ENCODE measurements at regions of chr1 and their contacts with region 1.

Region 1: DNA sequence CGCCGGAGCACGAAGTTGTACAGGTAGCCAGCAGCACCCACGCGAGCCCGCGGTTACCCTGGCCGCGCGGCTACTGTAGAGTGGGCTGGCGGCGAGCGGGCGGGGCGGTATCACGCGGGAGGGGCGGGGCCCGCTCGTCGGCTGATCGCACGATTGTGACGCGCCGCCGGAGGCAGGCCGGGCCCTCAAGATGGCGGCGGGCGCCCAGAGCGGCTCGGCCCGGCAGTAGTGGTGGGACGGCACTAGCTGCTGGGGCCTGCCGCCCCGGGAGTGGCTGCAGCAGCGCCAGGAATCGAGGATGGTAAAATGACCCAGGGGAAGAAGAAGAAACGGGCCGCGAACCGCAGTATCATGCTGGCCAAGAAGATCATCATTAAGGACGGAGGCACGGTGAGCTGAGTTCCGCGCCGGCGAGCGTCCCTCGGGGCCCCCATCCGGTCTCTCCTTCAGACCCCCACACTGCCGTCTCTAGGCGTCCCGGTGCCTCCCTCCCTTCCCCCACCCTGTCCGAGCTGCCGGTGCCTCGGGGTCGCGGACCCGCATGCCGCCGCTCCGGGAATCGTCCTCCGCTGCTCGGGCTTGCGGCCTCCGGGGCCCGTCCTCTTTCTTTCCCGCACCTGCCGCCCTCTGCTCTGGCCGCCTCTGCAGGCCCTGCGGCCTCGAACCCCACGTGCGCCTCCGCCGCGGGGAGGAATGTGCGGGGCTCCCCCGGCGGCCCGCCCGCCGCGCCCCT is 68.3 kb downstream of the SLC35A3 start:
- DNase-seq: peak; percentile 86
- H3K4me3 Mint-ChIP-seq: peak overlapping the region; percentile 98
- H3K27ac Mint-ChIP-seq: peak overlapping the region; percentile 99
- H3K4me1 Mint-ChIP-seq: peaks cover 50% of the 10 kb centered on the region
- H3K27me3 Mint-ChIP-seq: no peaks in the 10 kb centered on the region

Region 2: GRCh38 chr1:99849744-99850458 is 188.2 kb before region 1 on chr1 and contains the start of gene AGL:
- intact Hi-C with region 1: loop called (anchors 10 kb)
- DNase-seq: peak; percentile 81
- H3K4me3 Mint-ChIP-seq: peak within 1 kb of the TSS; percentile 96
- H3K27ac Mint-ChIP-seq: peak within 1 kb of the TSS; percentile 80
- H3K4me1 Mint-ChIP-seq: peaks cover 23% of the 10 kb centered on the region
- H3K27me3 Mint-ChIP-seq: no peaks in the 10 kb centered on the region
- total RNA-seq, gene AGL: 13.2 and 13.8 TPM in 2 replicates

Region 3: GRCh38 chr1:100051401-100051800 is 13.3 kb after region 1 on chr1:
- intact Hi-C with region 1: loop called (anchors 1 kb)
- DNase-seq: no peak
- H3K4me3 Mint-ChIP-seq: no peak overlapping the region
- H3K27ac Mint-ChIP-seq: no peak overlapping the region
- H3K4me1 Mint-ChIP-seq: peaks cover 49% of the 10 kb centered on the region
- H3K27me3 Mint-ChIP-seq: no peaks in the 10 kb centered on the region

Region 4: GRCh38 chr1:100087396-100087795 is 49.3 kb after region 1 on chr1:
- intact Hi-C with region 1: no loop called
- DNase-seq: no peak
- H3K4me3 Mint-ChIP-seq: no peak overlapping the region
- H3K27ac Mint-ChIP-seq: no peak overlapping the region
- H3K4me1 Mint-ChIP-seq: no peaks in the 10 kb centered on the region
- H3K27me3 Mint-ChIP-seq: no peaks in the 10 kb centered on the region

Region 5: DNA sequence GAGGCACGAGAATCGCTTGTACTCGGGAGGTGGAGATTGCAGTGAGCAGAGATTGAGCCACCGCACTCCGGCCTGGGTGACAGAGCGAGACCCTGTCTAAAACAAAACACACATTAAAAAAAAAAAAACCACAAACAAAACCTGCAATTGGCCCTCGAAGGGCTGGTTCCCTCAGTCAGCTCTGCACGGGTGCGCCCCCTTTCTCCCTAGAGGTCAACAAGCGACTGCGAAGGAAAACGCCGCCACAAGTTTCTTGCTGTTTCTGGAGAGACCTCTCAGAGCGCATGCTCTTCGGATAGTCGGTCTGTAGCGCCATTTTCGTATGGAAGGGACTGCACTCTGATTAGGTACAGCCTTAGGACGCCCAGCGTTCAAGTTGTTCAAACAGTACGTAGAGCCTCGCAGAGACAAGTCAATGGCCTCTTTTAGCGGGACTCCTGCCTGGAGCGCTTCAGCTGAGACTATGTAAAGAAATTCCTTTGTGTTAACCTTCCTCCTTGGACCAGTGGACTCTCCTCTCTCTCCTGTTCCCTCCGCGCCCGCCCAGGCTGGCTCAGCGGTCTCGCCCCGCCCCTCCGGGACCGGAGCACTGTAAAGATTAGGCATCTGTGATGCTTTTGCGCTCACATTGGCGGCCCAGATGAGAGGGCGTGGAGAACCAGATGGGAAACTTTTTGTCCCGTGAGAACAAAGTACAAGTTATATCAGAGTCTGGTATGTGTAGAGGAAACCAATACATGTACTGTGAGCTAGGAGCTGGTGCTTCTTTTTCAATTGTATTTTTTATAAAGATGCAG is 313.2 kb after region 1 on chr1:
- intact Hi-C with region 1: loop called (anchors 1 kb)
- DNase-seq: peak; percentile 84
- H3K4me3 Mint-ChIP-seq: peak overlapping the region; percentile 87
- H3K27ac Mint-ChIP-seq: peak overlapping the region; percentile 89
- H3K4me1 Mint-ChIP-seq: peaks cover 35% of the 10 kb centered on the region
- H3K27me3 Mint-ChIP-seq: peaks cover 4% of the 10 kb centered on the region

Region 6: GRCh38 chr1:100459358-100460114 is 421.4 kb after region 1 on chr1:
- intact Hi-C with region 1: loop called (anchors 5 kb)
- DNase-seq: peak; percentile 58
- H3K4me3 Mint-ChIP-seq: no peak overlapping the region
- H3K27ac Mint-ChIP-seq: no peak overlapping the region
- H3K4me1 Mint-ChIP-seq: peaks cover 34% of the 10 kb centered on the region
- H3K27me3 Mint-ChIP-seq: no peaks in the 10 kb centered on the region